ENCODE measurements at regions of chr17 and their contacts with region 1.

Region 1: DNA sequence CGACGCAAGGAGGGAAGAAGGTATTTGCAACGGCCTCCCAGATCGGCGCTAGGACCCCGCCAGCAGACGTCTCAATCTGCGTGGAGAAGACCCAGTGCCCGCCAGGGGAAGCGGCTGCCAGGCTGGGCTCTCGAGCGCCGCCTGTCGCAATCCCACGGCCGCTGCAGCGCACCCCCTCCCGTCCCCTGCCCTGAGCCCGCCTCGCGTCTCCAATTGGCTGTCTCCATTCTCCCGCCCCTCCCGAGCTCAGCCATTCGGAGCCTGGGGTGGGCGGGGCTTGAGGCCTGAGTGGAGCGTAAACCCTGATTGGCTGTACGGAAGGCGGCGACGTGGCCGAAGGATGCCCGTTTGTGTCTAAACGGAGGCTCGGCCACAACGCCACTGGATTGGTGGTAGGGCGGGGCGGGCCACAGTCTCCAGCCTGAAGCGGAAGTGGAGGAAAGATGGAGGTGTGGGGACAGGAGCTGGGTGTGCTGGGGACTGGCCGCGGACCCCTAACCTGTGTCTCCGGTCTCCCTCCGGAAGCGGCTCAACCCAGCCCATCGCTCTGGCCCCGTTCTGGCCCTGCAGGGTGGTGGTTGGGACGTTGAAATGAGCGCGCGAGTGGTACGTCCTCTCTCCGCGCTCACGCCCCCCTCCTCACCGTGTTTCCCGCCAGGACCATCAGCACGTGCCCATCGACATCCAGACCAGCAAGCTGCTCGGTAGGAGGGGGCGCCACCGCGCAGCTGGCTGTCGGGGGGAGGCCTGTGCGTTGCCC is at the start of gene CDK5RAP3:
- DNase-seq: peak; percentile 100
- ATAC-seq: peak; percentile 98 to 99
- H3K4me3 ChIP-seq: peak within 1 kb of the TSS; percentile 77 to 100 (median 90)
- H3K27ac ChIP-seq: peak within 1 kb of the TSS; percentile 85 to 89 (median 88)
- H3K4me1 ChIP-seq: peaks cover 6 to 18% of the 10 kb centered on the region in 2 donors
- H3K27me3 ChIP-seq: no peaks in the 10 kb centered on the region
- CTCF ChIP-seq: peak; percentile 95 to 96 (median 96)
- POLR2A ChIP-seq: peak; percentile 71 to 74
- total RNA-seq, gene CDK5RAP3: 14.2 to 35.9 (median 27.8) TPM

Region 2: DNA sequence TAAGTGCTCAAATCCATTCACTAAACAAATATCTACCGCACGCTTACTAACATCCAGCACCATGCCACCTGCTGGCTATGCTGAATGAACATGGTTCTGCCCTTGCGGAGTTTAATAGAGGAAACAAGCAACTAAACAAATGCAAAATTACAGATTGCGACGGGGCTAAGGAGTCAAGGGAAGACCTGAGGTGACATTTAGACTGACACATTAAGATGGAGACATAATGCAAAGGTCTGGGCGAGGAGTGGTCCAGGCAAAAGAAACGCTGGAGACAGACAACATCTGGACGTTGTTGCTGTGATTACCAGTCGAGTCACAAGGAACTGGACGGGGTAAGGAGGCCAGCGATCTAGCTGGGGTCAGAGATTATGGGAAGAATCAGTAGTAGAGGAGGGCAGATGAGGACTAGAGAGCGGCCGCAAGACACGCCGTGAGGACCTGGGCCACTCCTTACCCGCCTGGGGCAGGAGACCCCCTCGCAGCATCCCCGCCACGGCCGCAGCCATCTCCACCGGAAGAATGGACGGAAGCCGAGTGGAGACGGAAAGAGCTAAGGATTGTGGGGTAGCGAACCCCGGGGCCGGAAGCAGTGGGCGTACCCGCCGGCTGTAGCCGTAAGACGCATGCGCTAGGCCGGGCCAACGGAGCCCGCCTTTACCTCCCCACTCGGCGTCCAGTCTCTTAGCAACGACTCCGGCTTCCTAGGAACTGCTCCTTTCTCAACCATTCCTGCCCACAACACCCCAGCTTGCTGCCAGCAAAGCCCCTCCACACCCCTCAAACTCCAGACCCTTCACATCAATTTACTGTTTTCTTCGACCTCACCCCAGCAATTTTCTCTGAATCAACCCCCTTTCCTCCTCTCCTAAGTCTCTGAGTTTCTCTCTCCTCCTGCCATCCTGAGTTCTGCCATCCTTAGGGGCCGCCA is 139.6 kb before region 1 on chr17 and contains the starts of genes LRRC46 and MRPL10:
- in situ Hi-C with region 1: no loop called
- intact Hi-C with region 1: loop called (anchors 2 kb)
- DNase-seq: peak; percentile 83 to 88
- ATAC-seq: peak; percentile 91 to 94
- H3K4me3 ChIP-seq: peak within 1 kb of the TSS; percentile 77 to 92 (median 80)
- H3K27ac ChIP-seq: peak within 1 kb of the TSS; percentile 73 to 79 (median 76)
- H3K4me1 ChIP-seq: peaks cover 15 to 22% of the 10 kb centered on the region in 2 donors
- H3K27me3 ChIP-seq: no peaks in the 10 kb centered on the region
- CTCF ChIP-seq: peak in 3 of 5 experiments; percentile 12 to 28 (median 22)
- POLR2A ChIP-seq: peak; percentile 79 to 91
- total RNA-seq, gene LRRC46: 0.20 TPM in 1 of 4 donors, not detected in the others
- total RNA-seq, gene MRPL10: 38.6 to 76.5 (median 49.6) TPM

Region 3: DNA sequence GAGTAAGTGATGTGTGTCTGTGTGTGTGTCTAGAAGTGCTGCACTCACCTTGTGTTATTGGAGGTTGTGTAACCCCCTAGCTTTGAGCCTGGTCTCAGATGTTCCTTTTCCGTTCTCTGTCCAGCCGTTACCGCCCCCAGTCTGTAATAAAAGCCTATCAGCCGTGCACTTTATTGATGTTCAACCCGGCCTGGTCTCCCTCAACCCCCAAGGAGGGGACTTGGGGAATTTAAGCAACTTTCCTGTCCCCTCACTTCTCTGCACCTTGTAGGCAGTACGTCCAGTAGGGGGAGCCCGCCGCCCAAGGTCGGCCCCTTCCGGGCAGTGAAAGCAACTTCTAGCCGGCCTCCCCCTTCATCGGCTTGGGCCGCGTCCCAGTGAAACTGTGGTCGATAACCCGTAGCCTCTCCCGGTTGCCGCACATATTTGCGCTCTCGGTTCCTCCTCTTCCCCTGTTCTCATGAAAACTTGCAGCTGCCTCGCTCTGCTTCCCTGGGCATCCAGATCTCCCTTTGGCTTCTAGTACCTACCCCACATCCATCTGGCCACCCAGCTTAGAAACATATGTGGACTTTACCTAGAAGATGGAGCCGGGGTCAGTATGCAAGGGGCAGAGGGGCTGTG is 21.6 kb before region 1 on chr17:
- in situ Hi-C with region 1: no loop called
- intact Hi-C with region 1: loop called (anchors 1 kb)
- DNase-seq: peak; percentile 59 to 67
- ATAC-seq: peak; percentile 57 to 65
- H3K4me3 ChIP-seq: peak overlapping the region; percentile 31 to 51 (median 43)
- H3K27ac ChIP-seq: peak overlapping the region; percentile 74 to 77 (median 76)
- H3K4me1 ChIP-seq: peaks cover 25 to 28% of the 10 kb centered on the region in 2 donors
- H3K27me3 ChIP-seq: no peaks in the 10 kb centered on the region
- CTCF ChIP-seq: peak; percentile 81 to 93 (median 91)
- POLR2A ChIP-seq: no peak